ENCODE measurements at regions of chr2 and their contacts with region 1.

Region 1: GRCh38 chr2:39411181-39411944 is 25.7 kb downstream of the MAP4K3 start:
- DNase-seq: no peak
- CTCF ChIP-seq: no peak

Region 2: DNA sequence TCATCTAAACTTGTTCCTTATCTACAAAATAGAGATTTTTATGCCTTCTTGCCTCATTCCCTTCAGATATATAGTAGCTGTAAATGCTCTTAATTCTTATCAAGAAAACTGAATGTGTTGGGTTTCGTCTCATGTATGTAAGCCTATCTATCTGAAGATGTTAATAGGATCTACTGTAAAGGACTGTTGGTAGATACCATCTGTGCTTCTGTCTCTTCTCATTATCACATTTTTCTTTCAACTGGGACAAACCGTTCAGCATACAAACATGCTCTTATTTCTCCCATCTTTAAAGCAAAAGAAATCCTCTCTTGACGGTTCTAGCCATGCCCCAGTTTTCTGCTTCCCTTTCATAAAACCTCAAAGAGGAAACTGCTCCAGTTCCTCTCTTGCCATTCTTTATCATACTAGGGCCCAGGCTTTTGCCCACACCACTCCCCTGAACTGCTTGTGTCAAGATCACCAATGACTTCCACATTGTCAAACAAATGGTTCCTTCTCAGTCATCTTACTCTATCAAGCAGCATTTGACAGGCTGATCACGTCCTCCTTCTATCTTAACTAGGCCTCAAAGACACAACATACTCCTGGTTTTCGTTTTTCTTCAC is 433.0 kb before region 1 on chr2:
- CTCF ChIA-PET with region 1: no interaction called
- POLR2A ChIA-PET with region 1: no interaction called
- DNase-seq: no peak
- CTCF ChIP-seq: no peak

Region 3: DNA sequence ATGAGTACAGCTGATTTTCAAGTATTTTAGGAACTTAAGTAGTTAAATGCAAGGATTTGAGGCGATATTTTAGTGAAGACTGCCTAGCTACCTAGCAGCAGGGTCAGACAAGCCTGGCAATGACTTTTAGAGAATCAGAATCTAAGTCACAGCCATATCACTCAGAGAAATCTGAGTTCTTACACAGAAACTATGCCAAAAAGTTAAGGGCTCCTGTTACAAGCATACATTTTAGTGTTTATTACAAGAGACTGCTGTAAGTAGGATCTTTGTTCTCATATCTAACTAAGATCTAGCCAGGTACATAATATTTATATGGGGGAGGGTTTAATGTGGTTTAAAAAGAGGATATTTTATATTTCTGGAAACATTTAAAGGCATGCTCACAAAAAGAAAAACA is 11.8 kb before region 1 on chr2:
- CTCF ChIA-PET with region 1: interaction called, 21 read pairs
- POLR2A ChIA-PET with region 1: no interaction called
- DNase-seq: no peak
- CTCF ChIP-seq: no peak